Activated naive CD4-positive, alpha-beta T cell treated with anti-CD3 and anti-CD28 coated beads for 36 hours (primary cell): ENCODE measurements at regions of chr3 and their contacts with region 1.

Region 1: DNA sequence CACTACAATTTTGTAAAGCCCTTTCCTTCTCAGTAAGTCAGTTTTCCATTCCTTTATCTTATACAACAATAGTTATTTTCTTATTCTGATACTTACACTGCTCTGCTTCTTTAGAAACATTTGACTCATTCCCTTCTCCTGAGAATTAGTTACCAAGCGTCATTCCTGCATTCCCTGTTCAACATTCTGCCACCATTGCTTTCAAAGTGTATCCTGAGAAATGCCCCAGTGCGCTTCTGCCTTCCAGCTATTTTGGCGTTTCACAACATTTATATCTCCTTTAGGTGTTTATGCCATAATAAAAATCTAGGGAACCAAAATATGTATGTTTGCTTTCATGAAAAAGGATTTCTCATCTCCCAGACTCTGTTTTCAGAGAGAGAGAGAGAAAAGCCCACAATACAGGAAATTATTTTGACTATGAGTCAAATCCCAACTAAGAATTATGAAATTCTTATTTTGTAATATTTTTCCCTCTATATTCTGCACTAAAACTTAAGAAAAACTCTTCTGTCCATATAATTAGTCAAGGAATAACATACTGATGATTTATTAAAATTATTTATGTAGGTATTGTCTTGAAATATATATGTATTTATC is 118.2 kb upstream of the RAP2B start:
- DNase-seq: no peak
- H3K4me3 Mint-ChIP-seq: no peak overlapping the region
- H3K27ac Mint-ChIP-seq: no peak overlapping the region
- H3K4me1 Mint-ChIP-seq: peaks cover 3% of the 10 kb centered on the region
- H3K27me3 Mint-ChIP-seq: no peaks in the 10 kb centered on the region

Region 2: GRCh38 chr3:153221748-153222162 is 177.9 kb after region 1 on chr3:
- CTCF ChIA-PET with region 1: interaction called, 4 read pairs
- intact Hi-C with region 1: loop called (anchors 2 kb)
- DNase-seq: peak; percentile 73
- H3K4me3 Mint-ChIP-seq: peak overlapping the region; percentile 66
- H3K27ac Mint-ChIP-seq: peak overlapping the region; percentile 85
- H3K4me1 Mint-ChIP-seq: peaks cover 53% of the 10 kb centered on the region
- H3K27me3 Mint-ChIP-seq: no peaks in the 10 kb centered on the region

Region 3: DNA sequence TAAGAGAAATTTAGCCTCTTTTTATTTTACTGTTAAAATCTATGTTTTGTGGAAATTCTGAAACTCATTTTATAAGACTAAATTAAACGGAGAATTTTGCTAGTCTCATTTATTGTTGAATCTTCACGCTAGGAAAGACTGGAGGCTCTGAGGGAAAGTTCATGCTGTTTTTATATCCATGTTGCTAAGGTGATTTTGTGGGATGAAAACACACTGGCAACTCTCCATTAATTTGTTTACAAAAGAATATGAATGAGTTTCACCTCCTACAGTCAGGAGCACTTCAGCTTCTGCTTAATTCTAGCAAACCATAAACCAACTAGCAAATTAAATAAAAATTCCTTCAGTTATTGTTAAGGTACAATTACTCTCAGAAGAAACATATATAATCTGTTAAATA is 313.6 kb after region 1 on chr3:
- CTCF ChIA-PET with region 1: no interaction called
- intact Hi-C with region 1: no loop called
- DNase-seq: no peak
- H3K4me3 Mint-ChIP-seq: no peak overlapping the region
- H3K27ac Mint-ChIP-seq: no peak overlapping the region
- H3K4me1 Mint-ChIP-seq: no peaks in the 10 kb centered on the region
- H3K27me3 Mint-ChIP-seq: no peaks in the 10 kb centered on the region

Region 4: GRCh38 chr3:153443961-153444360 is 400.1 kb after region 1 on chr3:
- CTCF ChIA-PET with region 1: no interaction called
- intact Hi-C with region 1: loop called (anchors 2 kb)
- DNase-seq: no peak
- H3K4me3 Mint-ChIP-seq: no peak overlapping the region
- H3K27ac Mint-ChIP-seq: no peak overlapping the region
- H3K4me1 Mint-ChIP-seq: peaks cover 16% of the 10 kb centered on the region
- H3K27me3 Mint-ChIP-seq: no peaks in the 10 kb centered on the region

Region 5: GRCh38 chr3:153621953-153622352 is 578.1 kb after region 1 on chr3:
- CTCF ChIA-PET with region 1: no interaction called
- intact Hi-C with region 1: loop called (anchors 10 kb)
- DNase-seq: peak; percentile 33
- H3K4me3 Mint-ChIP-seq: no peak overlapping the region
- H3K27ac Mint-ChIP-seq: peak overlapping the region; percentile 78
- H3K4me1 Mint-ChIP-seq: peaks cover 57% of the 10 kb centered on the region
- H3K27me3 Mint-ChIP-seq: no peaks in the 10 kb centered on the region

Region 6: GRCh38 chr3:153927107-153927506 is 883.3 kb after region 1 on chr3:
- CTCF ChIA-PET with region 1: no interaction called
- intact Hi-C with region 1: loop called (anchors 1 kb)
- DNase-seq: no peak
- H3K4me3 Mint-ChIP-seq: no peak overlapping the region
- H3K27ac Mint-ChIP-seq: no peak overlapping the region
- H3K4me1 Mint-ChIP-seq: no peaks in the 10 kb centered on the region
- H3K27me3 Mint-ChIP-seq: peaks cover 5% of the 10 kb centered on the region

Region 7: GRCh38 chr3:154018100-154018696 is 974.4 kb after region 1 on chr3:
- CTCF ChIA-PET with region 1: no interaction called
- intact Hi-C with region 1: loop called (anchors 5 kb)
- DNase-seq: peak; percentile 38
- H3K4me3 Mint-ChIP-seq: no peak overlapping the region
- H3K27ac Mint-ChIP-seq: no peak overlapping the region
- H3K4me1 Mint-ChIP-seq: no peaks in the 10 kb centered on the region
- H3K27me3 Mint-ChIP-seq: no peaks in the 10 kb centered on the region